Activated CD8-positive, alpha-beta T cell treated with anti-CD3 and anti-CD28 coated beads for 36 hours (primary cell): ENCODE measurements at regions of chr19 and their contacts with region 1.

Region 1: GRCh38 chr19:3146677-3147100 is 10.9 kb downstream of the GNA15 start:
- DNase-seq: peak; percentile 73
- ATAC-seq: peak; percentile 61
- H3K4me3 Mint-ChIP-seq: no peak overlapping the region
- H3K27ac Mint-ChIP-seq: no peak overlapping the region
- H3K4me1 Mint-ChIP-seq: peaks cover 19% of the 10 kb centered on the region
- H3K27me3 Mint-ChIP-seq: no peaks in the 10 kb centered on the region
- CTCF ChIP-seq: peak; percentile 98

Region 2: GRCh38 chr19:3065675-3066357 is 80.9 kb before region 1 on chr19:
- CTCF ChIA-PET with region 1: no interaction called
- POLR2A ChIA-PET with region 1: no interaction called
- intact Hi-C with region 1: no loop called
- DNase-seq: no peak
- ATAC-seq: no peak
- H3K4me3 Mint-ChIP-seq: no peak overlapping the region
- H3K27ac Mint-ChIP-seq: no peak overlapping the region
- H3K4me1 Mint-ChIP-seq: peaks cover 8% of the 10 kb centered on the region
- H3K27me3 Mint-ChIP-seq: no peaks in the 10 kb centered on the region
- CTCF ChIP-seq: no peak

Region 3: GRCh38 chr19:3125900-3126524 is 20.7 kb before region 1 on chr19:
- CTCF ChIA-PET with region 1: interaction called, 55 read pairs
- POLR2A ChIA-PET with region 1: interaction called, 3 read pairs
- intact Hi-C with region 1: no loop called
- DNase-seq: peak; percentile 76
- ATAC-seq: peak; percentile 99
- H3K4me3 Mint-ChIP-seq: no peak overlapping the region
- H3K27ac Mint-ChIP-seq: no peak overlapping the region
- H3K4me1 Mint-ChIP-seq: peaks cover 7% of the 10 kb centered on the region
- H3K27me3 Mint-ChIP-seq: no peaks in the 10 kb centered on the region
- CTCF ChIP-seq: peak; percentile 83